Heart right ventricle (tissue), 16 donors: ENCODE measurements at regions of chr12 and their contacts with region 1.

Region 1: GRCh38 chr12:8890313-8891085 is 23.8 kb upstream of the PHC1 start:
- DNase-seq: peak in 1 of 2 donors; percentile 66
- ATAC-seq: peak; percentile 55 to 88 (median 82)
- H3K4me3 ChIP-seq: peak overlapping the region in 9 of 10 donors; percentile 18 to 58 (median 55)
- H3K27ac ChIP-seq: peak overlapping the region in 4 of 10 donors; percentile 36 to 54 (median 44)
- H3K4me1 ChIP-seq: peaks cover 0 to 5% (median 0%) of the 10 kb centered on the region in 9 donors
- H3K27me3 ChIP-seq: no peaks in the 10 kb centered on the region
- CTCF ChIP-seq: peak; percentile 72 to 94 (median 87)

Region 2: DNA sequence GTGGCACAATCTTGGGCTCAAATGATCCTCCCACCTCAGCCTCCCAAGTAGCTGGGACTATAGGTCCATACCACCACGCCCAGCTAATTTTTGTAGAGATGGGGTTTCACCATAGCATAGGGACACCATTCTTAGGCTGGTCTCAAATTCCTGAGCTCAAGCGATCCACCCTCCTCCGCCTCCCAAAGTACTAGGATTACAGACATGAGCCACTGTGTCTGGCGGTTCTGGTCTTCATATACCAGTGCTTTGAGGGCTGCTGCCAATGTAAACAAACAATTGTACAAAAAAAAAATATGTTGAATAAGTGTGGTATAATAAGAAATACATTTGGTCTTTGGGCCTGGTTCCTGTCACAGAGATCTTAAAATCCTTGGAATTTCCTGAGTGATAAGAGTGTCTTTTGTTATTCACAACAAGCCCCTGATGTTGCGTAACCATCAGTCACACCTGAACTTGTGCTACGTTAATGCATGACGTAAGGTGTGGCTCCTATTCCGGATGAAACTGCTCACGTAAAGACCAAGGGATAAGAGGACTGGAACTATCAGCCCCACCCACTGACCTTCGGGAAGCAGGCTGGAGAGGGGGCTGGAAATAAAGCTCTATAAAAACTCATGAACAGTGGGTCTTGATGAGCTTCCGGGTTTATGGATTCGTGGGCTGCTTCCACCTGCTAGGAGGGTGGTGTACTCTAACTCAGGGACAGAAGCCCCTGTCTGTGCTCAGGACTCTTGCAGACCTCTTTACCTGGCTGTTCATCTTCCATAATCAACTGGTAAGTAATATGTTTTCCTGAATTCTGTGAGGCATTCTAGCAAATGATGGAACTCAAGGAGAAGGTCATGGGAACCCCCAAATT is 209.2 kb before region 1 on chr12:
- intact Hi-C with region 1: loop called in 9 of 10 experiments (anchors 1 to 10 kb)
- DNase-seq: peak in 1 of 2 donors; percentile 32
- ATAC-seq: peak; percentile 27 to 91 (median 79)
- H3K4me3 ChIP-seq: peak overlapping the region in 4 of 10 donors; percentile 16 to 28 (median 24)
- H3K27ac ChIP-seq: peak overlapping the region in 9 of 10 donors; percentile 20 to 75 (median 61)
- H3K4me1 ChIP-seq: peaks cover 0 to 25% (median 6%) of the 10 kb centered on the region in 9 donors
- H3K27me3 ChIP-seq: no peaks in the 10 kb centered on the region
- CTCF ChIP-seq: no peak